B cell (primary cell): ENCODE measurements at regions of chr1 and their contacts with region 1.

Region 1: GRCh38 chr1:21157868-21158267 is 18.8 kb downstream of the EIF4G3 start:
- DNase-seq: no peak
- ATAC-seq: no peak
- H3K4me3 ChIP-seq: no peak overlapping the region
- H3K4me3 Mint-ChIP-seq: no peak overlapping the region
- H3K27ac ChIP-seq: no peak overlapping the region
- H3K27ac Mint-ChIP-seq: no peak overlapping the region
- H3K4me1 ChIP-seq: no peaks in the 10 kb centered on the region
- H3K4me1 Mint-ChIP-seq: peaks cover 22% of the 10 kb centered on the region
- H3K27me3 ChIP-seq: no peaks in the 10 kb centered on the region
- H3K27me3 Mint-ChIP-seq: no peaks in the 10 kb centered on the region
- CTCF ChIP-seq: no peak

Region 2: GRCh38 chr1:20974069-20974468 is 183.8 kb before region 1 on chr1:
- CTCF ChIA-PET with region 1: no interaction called
- POLR2A ChIA-PET with region 1: no interaction called
- intact Hi-C with region 1: no loop called
- DNase-seq: no peak
- ATAC-seq: no peak
- H3K4me3 ChIP-seq: no peak overlapping the region
- H3K4me3 Mint-ChIP-seq: no peak overlapping the region
- H3K27ac ChIP-seq: no peak overlapping the region
- H3K27ac Mint-ChIP-seq: no peak overlapping the region
- H3K4me1 ChIP-seq: no peaks in the 10 kb centered on the region
- H3K4me1 Mint-ChIP-seq: no peaks in the 10 kb centered on the region
- H3K27me3 ChIP-seq: no peaks in the 10 kb centered on the region
- H3K27me3 Mint-ChIP-seq: no peaks in the 10 kb centered on the region
- CTCF ChIP-seq: no peak

Region 3: GRCh38 chr1:21176586-21177555 is 19.0 kb after region 1 on chr1 and contains the start of gene EIF4G3:
- CTCF ChIA-PET with region 1: interaction called, 3 read pairs
- POLR2A ChIA-PET with region 1: interaction called, 10 read pairs
- intact Hi-C with region 1: no loop called
- DNase-seq: peak; percentile 99
- ATAC-seq: peak; percentile 93
- H3K4me3 ChIP-seq: peak within 1 kb of the TSS; percentile 76 to 96 (median 83)
- H3K4me3 Mint-ChIP-seq: peak within 1 kb of the TSS; percentile 97
- H3K27ac ChIP-seq: peak within 1 kb of the TSS; percentile 73 to 89
- H3K27ac Mint-ChIP-seq: peak within 1 kb of the TSS; percentile 96
- H3K4me1 ChIP-seq: peaks cover 16 to 23% of the 10 kb centered on the region in 2 donors
- H3K4me1 Mint-ChIP-seq: peaks cover 29% of the 10 kb centered on the region
- H3K27me3 ChIP-seq: no peaks in the 10 kb centered on the region
- H3K27me3 Mint-ChIP-seq: no peaks in the 10 kb centered on the region
- CTCF ChIP-seq: no peak
- total RNA-seq, gene EIF4G3: 76.0 and 80.9 TPM in 2 replicates